ENCODE measurements at regions of chr12 and their contacts with region 1.

Region 1: DNA sequence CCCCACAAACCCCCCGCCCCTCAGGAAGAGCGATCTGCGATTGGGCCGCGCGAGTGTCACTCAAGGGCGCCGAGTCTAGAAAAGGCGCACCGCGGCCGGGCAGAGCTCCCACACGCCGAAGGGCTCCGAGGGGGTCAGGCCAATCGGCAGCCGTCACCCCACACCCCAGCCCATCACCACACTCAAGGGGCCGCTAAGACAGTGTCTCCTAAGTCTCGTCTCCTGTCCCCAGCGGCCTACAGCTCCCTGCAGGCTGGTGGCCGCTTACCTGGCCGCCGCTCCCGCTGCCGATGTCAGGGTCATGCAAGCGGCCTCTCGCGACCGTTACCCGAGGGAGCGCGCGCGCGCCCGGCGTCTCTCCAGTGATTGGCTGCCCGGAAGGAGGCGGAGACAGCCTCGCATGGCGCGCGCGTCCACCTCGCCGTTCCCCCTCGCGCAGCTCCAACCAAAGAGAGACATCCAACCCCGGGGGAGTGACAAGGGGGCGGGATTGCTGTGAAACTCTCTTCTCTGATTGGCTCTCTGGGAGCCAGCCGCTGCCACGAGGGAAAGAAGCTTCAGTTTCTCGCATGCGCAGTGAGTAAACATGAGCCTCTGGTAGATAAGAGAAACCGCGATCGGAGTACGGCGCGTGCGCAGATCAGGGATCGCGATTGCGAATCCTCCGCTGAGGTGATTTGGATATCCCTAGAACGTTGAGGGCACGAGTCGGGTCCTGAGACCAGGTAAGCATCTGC is at the starts of genes MPHOSPH9 and MTRFR:
- DNase-seq: peak; percentile 99
- total RNA-seq, gene MPHOSPH9: 12.6 to 18.7 TPM
- total RNA-seq, gene MTRFR: 5.8 to 7.3 TPM

Region 2: DNA sequence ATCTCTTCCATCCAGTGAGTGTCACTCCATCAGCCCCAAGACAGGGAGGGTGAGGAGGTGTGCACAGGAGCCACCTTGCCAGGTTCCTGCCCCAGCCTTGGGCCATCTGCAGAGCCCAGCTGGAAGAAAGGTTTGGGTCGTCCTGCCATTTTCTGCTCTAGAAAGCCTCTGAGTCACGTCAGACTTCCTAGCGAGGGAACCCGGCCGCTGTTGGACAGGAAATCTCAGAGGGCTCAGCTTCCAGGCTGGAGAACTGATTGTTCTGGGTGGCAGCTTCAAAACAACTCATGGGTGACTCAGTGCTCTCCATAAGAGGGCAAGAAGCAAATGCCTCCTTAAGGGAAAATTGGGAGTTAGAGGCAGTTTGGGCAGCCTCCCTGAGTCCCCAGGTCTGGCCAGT is 381.2 kb before region 1 on chr12:
- intact Hi-C with region 1: loop called in 1 of 2 experiments (anchors 10 kb)
- DNase-seq: no peak

Region 3: GRCh38 chr12:122860346-122861090 is 372.5 kb before region 1 on chr12:
- intact Hi-C with region 1: loop called (anchors 5 to 10 kb)
- DNase-seq: peak; percentile 96

Region 4: GRCh38 chr12:122980183-122981046 is 252.6 kb before region 1 on chr12 and contains the start of gene ARL6IP4:
- intact Hi-C with region 1: loop called in 1 of 2 experiments (anchors 5 kb)
- DNase-seq: peak; percentile 90
- total RNA-seq, gene ARL6IP4: 125 to 132 TPM

Region 5: GRCh38 chr12:123043536-123044001 is 189.4 kb before region 1 on chr12:
- intact Hi-C with region 1: loop called in 1 of 2 experiments (anchors 5 kb)
- DNase-seq: peak; percentile 93

Measured in posterior vena cava (tissue), 2 donors.